HCT116 (cell line): ENCODE measurements at regions of chr12 and their contacts with region 1.

Region 1: DNA sequence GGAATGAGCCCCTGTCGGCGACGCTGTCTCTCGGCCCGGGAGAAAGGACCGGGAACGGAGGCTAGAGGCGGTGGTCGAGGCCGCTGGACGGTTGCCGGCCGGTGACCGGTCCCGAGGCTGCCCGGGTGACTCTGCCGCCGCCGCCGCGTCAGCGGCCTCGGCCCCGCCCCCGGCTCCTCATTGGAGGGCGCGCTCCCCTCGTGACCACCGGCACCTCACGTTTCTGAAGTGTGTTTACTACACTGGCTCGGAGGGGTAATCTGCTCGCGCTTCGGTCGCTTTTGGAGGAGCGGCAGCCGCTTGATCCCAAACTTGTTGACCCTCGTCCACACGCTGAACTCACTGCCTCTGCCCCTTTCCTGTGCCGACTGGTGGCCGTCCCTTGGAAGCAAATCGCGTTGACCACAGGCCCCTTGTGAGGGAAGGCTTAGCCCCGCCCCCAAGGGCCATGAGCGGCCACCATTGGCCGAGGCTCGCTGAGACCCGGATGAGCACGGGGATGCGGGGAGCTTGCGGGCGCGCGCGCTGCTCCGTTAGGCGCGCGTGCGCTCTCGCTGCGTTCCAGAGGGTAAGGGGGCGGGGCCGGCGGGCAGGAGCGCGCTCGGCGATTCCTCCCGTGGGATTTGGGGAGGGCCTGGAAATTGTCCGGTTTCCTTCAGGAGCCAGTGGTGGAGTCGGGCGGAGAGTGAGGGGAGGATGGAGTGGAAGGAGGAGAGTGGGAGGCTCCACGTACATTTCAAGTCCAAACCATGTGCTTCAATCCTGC is at the start of gene CRY1:
- DNase-seq: peak; percentile 92
- ATAC-seq: peak; percentile 83
- H3K4me3 ChIP-seq: peak within 1 kb of the TSS; percentile 54 to 76
- H3K27ac ChIP-seq: peak within 1 kb of the TSS; percentile 57
- H3K4me1 ChIP-seq: peaks cover 13 to 23% of the 10 kb centered on the region in 2 experiments
- H3K27me3 ChIP-seq: no peaks in the 10 kb centered on the region
- CTCF ChIP-seq: no peak
- POLR2A ChIP-seq: peak; percentile 50
- RAD21 ChIP-seq: no peak
- total RNA-seq, gene CRY1: 16.3 TPM

Region 2: GRCh38 chr12:107007411-107007810 is 86.2 kb before region 1 on chr12:
- CTCF ChIA-PET with region 1: no interaction called
- POLR2A ChIA-PET with region 1: no interaction called
- RAD21 ChIA-PET with region 1: no interaction called
- intact Hi-C with region 1: no loop called
- DNase-seq: no peak
- ATAC-seq: no peak
- H3K4me3 ChIP-seq: no peak overlapping the region
- H3K27ac ChIP-seq: no peak overlapping the region
- H3K4me1 ChIP-seq: no peaks in the 10 kb centered on the region
- H3K27me3 ChIP-seq: no peaks in the 10 kb centered on the region
- CTCF ChIP-seq: no peak
- POLR2A ChIP-seq: no peak
- RAD21 ChIP-seq: no peak

Region 3: DNA sequence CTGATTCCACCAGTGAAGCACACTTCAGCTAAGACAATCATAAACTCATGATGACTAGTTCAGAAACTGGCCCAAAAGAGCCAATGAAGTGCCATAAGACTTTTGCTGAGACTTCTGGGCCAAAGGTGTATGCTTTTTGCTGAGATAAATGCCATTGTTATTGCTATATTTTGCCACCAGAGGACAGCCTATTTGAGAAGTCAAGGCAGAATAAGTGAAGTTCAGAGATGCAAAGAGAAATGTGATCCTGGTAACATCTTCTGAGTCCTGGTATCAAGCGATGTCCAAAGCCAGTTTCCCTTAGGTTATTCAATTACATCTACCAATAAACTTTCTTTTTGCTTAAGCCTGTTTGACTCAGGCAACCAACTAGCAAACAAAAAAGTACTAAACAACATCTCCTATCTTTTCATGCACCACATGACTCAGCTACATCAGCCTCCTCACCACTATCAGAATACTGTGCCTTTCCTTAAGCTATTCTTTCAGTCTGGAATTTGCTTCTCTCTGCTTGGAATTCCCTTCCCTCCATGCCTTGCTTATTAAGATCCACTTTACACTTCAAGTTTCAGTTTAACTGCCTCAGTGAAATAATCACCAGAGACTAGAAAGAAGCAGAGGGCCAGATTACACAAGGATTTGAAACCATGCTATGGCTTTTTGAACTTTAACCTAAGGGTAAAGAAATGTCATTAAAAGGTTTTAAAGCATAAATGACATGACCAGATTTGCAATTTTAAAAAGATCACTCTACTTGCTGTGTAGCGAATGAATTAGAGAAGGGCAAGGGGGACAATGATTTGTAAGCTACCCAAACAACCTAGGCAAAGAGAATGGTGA is 14.2 kb before region 1 on chr12:
- CTCF ChIA-PET with region 1: interaction called, 17 read pairs
- POLR2A ChIA-PET with region 1: no interaction called
- RAD21 ChIA-PET with region 1: no interaction called
- intact Hi-C with region 1: no loop called
- DNase-seq: no peak
- ATAC-seq: peak; percentile 77
- H3K4me3 ChIP-seq: no peak overlapping the region
- H3K27ac ChIP-seq: no peak overlapping the region
- H3K4me1 ChIP-seq: peaks cover 0 to 4% of the 10 kb centered on the region in 2 experiments; a peak in 1 of 4 replicates
- H3K27me3 ChIP-seq: no peaks in the 10 kb centered on the region
- CTCF ChIP-seq: peak; percentile 51 to 65 (median 57); a peak in 5 of 6 replicates
- POLR2A ChIP-seq: no peak
- RAD21 ChIP-seq: peak; percentile 43

Region 4: DNA sequence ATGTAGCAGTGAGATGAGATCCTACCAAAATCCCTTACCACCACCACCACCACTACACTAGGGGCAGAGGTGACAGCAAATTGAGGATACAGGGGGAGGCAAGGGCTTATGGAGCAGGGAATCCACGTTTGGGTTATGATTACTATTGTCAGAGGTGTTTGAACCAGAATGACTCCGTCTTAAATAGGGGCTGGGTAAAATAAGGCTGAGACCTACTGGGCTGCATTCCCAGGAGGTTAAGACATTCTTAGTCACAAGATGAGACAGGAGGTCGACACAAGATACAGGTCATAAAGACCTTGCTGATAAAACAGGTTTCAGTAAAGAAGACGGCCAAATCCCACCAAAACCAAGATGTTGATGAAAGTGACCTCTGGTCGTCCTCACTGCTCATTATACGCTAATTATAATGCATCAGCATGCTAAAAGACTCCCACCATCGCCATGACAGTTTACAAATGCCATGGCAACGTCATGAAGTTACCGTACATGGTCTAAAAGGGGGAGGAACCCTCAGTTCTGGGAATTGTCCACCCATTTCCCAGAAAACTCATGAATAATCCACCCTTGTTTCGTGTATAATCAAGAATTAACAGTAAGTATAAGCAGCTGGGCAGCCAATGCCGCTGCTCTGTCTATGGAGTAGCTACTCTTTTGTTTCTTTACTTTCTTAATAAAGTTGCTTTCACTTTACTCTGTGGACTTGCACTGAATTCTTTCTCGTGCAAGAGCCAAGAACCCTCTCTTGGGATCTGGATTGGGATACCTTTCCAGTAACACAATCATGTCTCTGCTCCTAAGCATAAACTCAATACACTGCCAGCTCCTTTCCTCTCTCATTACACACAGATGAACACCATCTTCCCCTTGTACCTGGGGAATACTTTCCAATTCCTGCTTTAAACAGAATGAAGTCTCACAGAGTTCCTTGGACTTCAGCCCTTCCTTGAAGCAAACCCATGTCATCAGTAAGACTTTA is 16.4 kb after region 1 on chr12:
- CTCF ChIA-PET with region 1: interaction called, 18 read pairs
- POLR2A ChIA-PET with region 1: no interaction called
- RAD21 ChIA-PET with region 1: no interaction called
- intact Hi-C with region 1: no loop called
- DNase-seq: no peak
- ATAC-seq: no peak
- H3K4me3 ChIP-seq: no peak overlapping the region
- H3K27ac ChIP-seq: no peak overlapping the region
- H3K4me1 ChIP-seq: peaks cover 0 to 2% of the 10 kb centered on the region in 2 experiments; a peak in 1 of 4 replicates
- H3K27me3 ChIP-seq: no peaks in the 10 kb centered on the region
- CTCF ChIP-seq: no peak
- POLR2A ChIP-seq: no peak
- RAD21 ChIP-seq: no peak

Region 5: GRCh38 chr12:107122452-107122958 is 28.9 kb after region 1 on chr12:
- CTCF ChIA-PET with region 1: no interaction called
- POLR2A ChIA-PET with region 1: no interaction called
- RAD21 ChIA-PET with region 1: no interaction called
- intact Hi-C with region 1: no loop called
- DNase-seq: no peak
- ATAC-seq: no peak
- H3K4me3 ChIP-seq: no peak overlapping the region
- H3K27ac ChIP-seq: no peak overlapping the region
- H3K4me1 ChIP-seq: no peaks in the 10 kb centered on the region
- H3K27me3 ChIP-seq: peaks cover 11% of the 10 kb centered on the region; the same call in 1 of the 2 replicates
- CTCF ChIP-seq: no peak
- POLR2A ChIP-seq: no peak
- RAD21 ChIP-seq: no peak

Region 6: DNA sequence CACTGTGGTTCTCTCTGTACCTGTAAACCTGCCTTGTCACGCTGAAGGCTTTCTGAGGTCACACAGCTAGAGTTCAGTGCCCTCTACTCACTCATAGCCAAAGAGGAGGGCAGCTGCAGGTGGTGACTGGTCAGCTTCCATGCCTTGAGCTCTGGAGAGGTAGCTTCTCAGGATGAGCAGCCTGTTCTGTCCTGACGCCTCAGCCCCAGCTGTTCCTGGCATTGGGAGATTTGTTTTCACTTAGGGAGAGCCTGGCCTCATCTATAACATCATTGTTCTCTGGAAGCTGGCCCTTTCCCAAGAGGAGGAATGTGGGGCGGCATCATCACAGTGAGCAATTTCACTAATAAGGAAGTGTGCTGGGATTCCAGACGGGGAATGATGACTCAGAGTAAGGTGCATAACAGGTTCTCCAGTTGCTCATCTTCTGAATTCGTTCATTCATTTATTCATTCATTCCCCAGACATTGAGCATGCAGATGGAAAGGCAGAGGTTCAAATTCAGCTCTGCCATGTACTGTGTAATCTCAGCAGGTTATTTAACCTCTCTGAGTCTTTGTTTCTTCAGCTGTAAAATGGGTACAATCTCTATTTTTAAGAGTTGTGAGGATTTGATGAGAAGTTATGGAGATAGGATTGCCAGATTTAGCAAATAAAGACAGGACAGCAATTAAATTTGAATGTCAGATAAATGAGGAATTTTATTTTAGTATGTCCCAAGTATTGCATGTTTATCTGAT is 255.6 kb after region 1 on chr12:
- CTCF ChIA-PET with region 1: no interaction called
- POLR2A ChIA-PET with region 1: no interaction called
- RAD21 ChIA-PET with region 1: no interaction called
- intact Hi-C with region 1: no loop called
- DNase-seq: peak; percentile 94
- ATAC-seq: peak; percentile 76
- H3K4me3 ChIP-seq: peak overlapping the region in 1 of 2 experiments; percentile 27; a peak in 2 of 4 replicates
- H3K27ac ChIP-seq: peak overlapping the region; percentile 52
- H3K4me1 ChIP-seq: peaks cover 61 to 86% of the 10 kb centered on the region in 2 experiments
- H3K27me3 ChIP-seq: no peaks in the 10 kb centered on the region
- CTCF ChIP-seq: no peak
- POLR2A ChIP-seq: no peak
- RAD21 ChIP-seq: peak; percentile 34; the same call in 1 of the 2 replicates

Region 7: DNA sequence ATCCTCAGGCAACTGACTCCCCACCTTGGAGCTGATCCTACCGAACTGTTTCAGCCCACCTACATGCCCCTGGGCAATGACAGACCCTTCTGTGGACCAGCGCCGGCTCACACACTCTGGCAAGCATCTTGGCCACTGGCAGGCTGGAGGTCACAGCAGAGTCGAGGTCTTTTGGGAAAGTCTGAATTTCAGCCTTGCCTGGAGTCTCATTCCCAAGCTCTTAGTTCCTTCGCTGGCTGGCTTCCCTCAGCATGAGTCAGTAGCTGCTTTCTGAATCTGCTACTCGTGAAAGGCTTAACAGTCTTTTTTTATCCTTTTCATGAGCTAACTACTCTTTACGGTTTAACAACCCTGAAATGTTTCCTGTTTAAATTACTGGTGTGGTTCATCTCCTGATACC is 725.4 kb after region 1 on chr12:
- CTCF ChIA-PET with region 1: no interaction called
- POLR2A ChIA-PET with region 1: no interaction called
- RAD21 ChIA-PET with region 1: no interaction called
- intact Hi-C with region 1: no loop called
- DNase-seq: no peak
- ATAC-seq: no peak
- H3K4me3 ChIP-seq: no peak overlapping the region
- H3K27ac ChIP-seq: no peak overlapping the region
- H3K4me1 ChIP-seq: no peaks in the 10 kb centered on the region
- H3K27me3 ChIP-seq: no peaks in the 10 kb centered on the region
- CTCF ChIP-seq: no peak
- POLR2A ChIP-seq: no peak
- RAD21 ChIP-seq: no peak